ENCODE measurements at regions of chr9 and their contacts with region 1.

Region 1: DNA sequence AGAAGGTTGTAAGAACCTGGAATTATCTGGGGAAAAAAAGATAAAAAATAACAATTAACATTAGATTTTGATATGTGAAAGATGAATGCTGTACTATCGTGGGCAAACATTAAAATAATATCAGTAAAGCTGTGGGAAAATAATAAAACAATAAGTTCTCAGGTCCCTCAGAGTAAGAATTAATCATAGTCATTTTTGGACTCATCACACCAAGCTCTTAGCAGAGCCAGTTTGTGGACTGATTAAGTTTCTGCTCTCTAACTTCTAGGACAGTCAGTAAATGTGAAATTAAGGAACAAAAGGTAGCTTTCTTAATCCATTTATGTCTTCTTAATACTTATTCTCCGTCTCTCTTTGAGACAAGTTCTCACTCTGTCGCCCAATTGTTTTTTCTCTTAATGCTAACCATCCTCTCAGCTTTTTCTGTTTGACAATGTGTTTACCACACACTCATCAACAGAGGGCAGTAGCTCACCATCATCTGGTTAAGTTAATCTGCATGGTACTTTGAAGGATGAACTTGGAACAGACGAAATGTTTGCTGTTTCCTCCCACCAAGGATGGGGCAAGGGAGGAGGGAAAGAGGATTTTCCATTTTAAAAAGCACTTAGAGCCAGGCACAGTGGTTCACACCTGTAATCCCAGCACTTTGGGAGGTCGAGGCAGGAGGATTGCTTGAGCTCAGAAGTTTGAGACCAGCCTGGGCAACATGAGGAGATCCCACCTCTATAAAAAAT is 5.3 kb upstream of the ACO1 start:
- DNase-seq: peak; percentile 83
- H3K4me3 ChIP-seq: no peak overlapping the region
- H3K27ac ChIP-seq: no peak overlapping the region
- H3K4me1 ChIP-seq: peaks cover 15% of the 10 kb centered on the region
- H3K27me3 ChIP-seq: peaks cover 0 to 5% of the 10 kb centered on the region in 2 experiments
- CTCF ChIP-seq: peak; percentile 60 to 72
- POLR2A ChIP-seq: no peak

Region 2: GRCh38 chr9:32306006-32306405 is 73.2 kb before region 1 on chr9:
- CTCF ChIA-PET with region 1: no interaction called
- POLR2A ChIA-PET with region 1: no interaction called
- dilution Hi-C with region 1: no loop called
- intact Hi-C with region 1: no loop called
- DNase-seq: no peak
- H3K4me3 ChIP-seq: no peak overlapping the region
- H3K27ac ChIP-seq: no peak overlapping the region
- H3K4me1 ChIP-seq: no peaks in the 10 kb centered on the region
- H3K27me3 ChIP-seq: no peaks in the 10 kb centered on the region
- CTCF ChIP-seq: no peak
- POLR2A ChIP-seq: no peak

Region 3: GRCh38 chr9:32413424-32413823 is 34.3 kb after region 1 on chr9:
- CTCF ChIA-PET with region 1: interaction called, 15 read pairs
- POLR2A ChIA-PET with region 1: no interaction called
- dilution Hi-C with region 1: no loop called
- intact Hi-C with region 1: no loop called
- DNase-seq: no peak
- H3K4me3 ChIP-seq: no peak overlapping the region
- H3K27ac ChIP-seq: no peak overlapping the region
- H3K4me1 ChIP-seq: no peaks in the 10 kb centered on the region
- H3K27me3 ChIP-seq: no peaks in the 10 kb centered on the region
- CTCF ChIP-seq: no peak
- POLR2A ChIP-seq: no peak

Region 4: DNA sequence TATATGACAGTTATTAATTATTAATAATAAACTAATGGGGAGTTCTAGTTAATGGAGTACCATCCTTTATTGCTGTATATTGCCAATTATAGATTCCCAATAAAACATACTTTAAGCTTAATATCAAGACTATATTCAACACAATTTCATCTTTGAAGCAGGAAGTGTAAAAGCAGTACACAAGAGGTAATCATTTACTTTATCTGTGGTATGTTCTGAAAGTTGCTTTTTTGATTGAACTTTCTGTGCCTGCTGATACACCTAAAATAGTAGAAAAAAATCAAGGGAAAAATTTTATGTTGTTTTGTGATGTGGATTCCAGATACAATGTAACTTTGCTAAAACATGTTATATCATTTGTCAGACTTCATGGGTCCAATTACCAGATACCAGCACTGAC is 63.3 kb after region 1 on chr9:
- CTCF ChIA-PET with region 1: interaction called, 383 read pairs
- POLR2A ChIA-PET with region 1: no interaction called
- dilution Hi-C with region 1: no loop called
- intact Hi-C with region 1: no loop called
- DNase-seq: no peak
- H3K4me3 ChIP-seq: no peak overlapping the region
- H3K27ac ChIP-seq: no peak overlapping the region
- H3K4me1 ChIP-seq: no peaks in the 10 kb centered on the region
- H3K27me3 ChIP-seq: no peaks in the 10 kb centered on the region
- CTCF ChIP-seq: no peak
- POLR2A ChIP-seq: no peak

Region 5: DNA sequence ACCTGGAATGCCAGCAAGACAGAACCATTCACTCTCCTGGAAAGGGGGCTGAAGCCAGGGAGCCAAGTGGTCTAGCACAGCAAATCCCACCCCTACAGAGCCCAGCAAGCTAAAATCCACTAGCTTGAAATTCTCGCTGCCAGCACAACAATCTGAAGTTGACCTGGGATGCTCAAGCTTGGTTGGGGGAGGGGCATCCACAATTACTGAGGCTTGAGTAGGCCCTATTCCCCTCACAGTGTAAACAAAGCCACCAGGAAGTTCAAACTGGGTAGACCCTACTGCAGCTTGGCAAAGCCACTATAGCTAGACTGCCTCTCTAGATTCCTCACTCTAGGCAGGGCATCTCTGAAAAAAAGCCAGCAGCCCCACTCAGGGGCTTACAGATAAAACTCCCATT is 129.6 kb after region 1 on chr9:
- CTCF ChIA-PET with region 1: interaction called, 16 read pairs
- POLR2A ChIA-PET with region 1: no interaction called
- dilution Hi-C with region 1: no loop called
- intact Hi-C with region 1: no loop called
- DNase-seq: no peak
- H3K4me3 ChIP-seq: no peak overlapping the region
- H3K27ac ChIP-seq: no peak overlapping the region
- H3K4me1 ChIP-seq: peaks cover 13% of the 10 kb centered on the region
- H3K27me3 ChIP-seq: no peaks in the 10 kb centered on the region
- CTCF ChIP-seq: no peak
- POLR2A ChIP-seq: no peak

Region 6: GRCh38 chr9:32566770-32567169 is 187.6 kb after region 1 on chr9:
- CTCF ChIA-PET with region 1: interaction called, 1,384 read pairs
- POLR2A ChIA-PET with region 1: no interaction called
- dilution Hi-C with region 1: loop called (anchors 25 kb)
- intact Hi-C with region 1: no loop called
- DNase-seq: no peak
- H3K4me3 ChIP-seq: no peak overlapping the region
- H3K27ac ChIP-seq: no peak overlapping the region
- H3K4me1 ChIP-seq: peaks cover 9% of the 10 kb centered on the region
- H3K27me3 ChIP-seq: no peaks in the 10 kb centered on the region
- CTCF ChIP-seq: no peak
- POLR2A ChIP-seq: no peak

Region 7: GRCh38 chr9:32644698-32645097 is 265.5 kb after region 1 on chr9:
- CTCF ChIA-PET with region 1: interaction called, 11 read pairs
- POLR2A ChIA-PET with region 1: no interaction called
- dilution Hi-C with region 1: no loop called
- intact Hi-C with region 1: no loop called
- DNase-seq: peak; percentile 84
- H3K4me3 ChIP-seq: no peak overlapping the region
- H3K27ac ChIP-seq: no peak overlapping the region
- H3K4me1 ChIP-seq: no peaks in the 10 kb centered on the region
- H3K27me3 ChIP-seq: peaks cover 0 to under 1% of the 10 kb centered on the region in 2 experiments
- CTCF ChIP-seq: no peak
- POLR2A ChIP-seq: no peak

Region 8: GRCh38 chr9:33044127-33044673 is 665.0 kb after region 1 on chr9:
- CTCF ChIA-PET with region 1: interaction called, 3 read pairs
- POLR2A ChIA-PET with region 1: no interaction called
- dilution Hi-C with region 1: no loop called
- intact Hi-C with region 1: loop called (anchors 5 kb)
- DNase-seq: peak; percentile 92
- H3K4me3 ChIP-seq: peak overlapping the region; percentile 51 to 74 (median 65)
- H3K27ac ChIP-seq: peak overlapping the region; percentile 81
- H3K4me1 ChIP-seq: peaks cover 11% of the 10 kb centered on the region
- H3K27me3 ChIP-seq: no peaks in the 10 kb centered on the region
- CTCF ChIP-seq: no peak
- POLR2A ChIP-seq: peak; percentile 80

Measured in endothelial cell of umbilical vein (primary cell).